T-cell (primary cell): ENCODE measurements at regions of chr3 and their contacts with region 1.

Region 1: DNA sequence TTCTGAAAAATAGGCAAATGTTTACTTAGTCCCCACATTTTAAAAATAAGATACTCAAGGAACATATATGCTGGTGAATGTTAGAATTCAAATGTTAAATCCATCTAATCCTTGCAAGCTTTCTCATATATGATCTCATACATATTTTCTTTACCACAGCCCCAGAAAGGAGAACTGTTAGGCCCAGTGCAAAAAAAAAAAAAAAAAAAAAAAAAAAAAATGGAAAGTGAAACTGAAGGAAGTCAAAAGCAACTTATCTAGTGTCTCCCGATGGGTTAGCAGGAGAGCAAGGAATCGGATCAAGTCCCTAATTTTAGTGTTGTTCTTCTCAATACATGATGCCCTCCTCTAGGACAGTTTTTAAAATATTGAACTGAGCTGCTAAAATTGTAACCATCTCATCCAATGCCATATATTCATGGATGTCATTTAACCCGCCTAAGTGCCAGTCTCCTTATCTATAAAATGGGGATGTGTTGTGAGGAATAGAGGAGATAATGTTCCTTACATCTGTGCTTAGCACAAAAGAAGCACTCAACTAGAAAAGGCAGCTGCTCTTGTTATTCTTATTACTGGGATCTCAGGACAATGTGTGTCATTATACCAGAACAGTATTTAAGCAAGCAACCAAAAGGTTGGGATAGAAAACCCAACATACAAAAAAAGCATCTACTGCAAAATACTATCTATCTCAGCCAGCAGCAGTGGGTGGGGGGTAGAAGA is 279.7 kb downstream of the MAGI1 start:
- DNase-seq: no peak
- ATAC-seq: no peak
- H3K4me3 ChIP-seq: no peak overlapping the region
- H3K4me3 Mint-ChIP-seq: no peak overlapping the region
- H3K27ac ChIP-seq: no peak overlapping the region
- H3K27ac Mint-ChIP-seq: no peak overlapping the region
- H3K4me1 ChIP-seq: no peaks in the 10 kb centered on the region
- H3K4me1 Mint-ChIP-seq: no peaks in the 10 kb centered on the region
- H3K27me3 ChIP-seq: peaks cover 0 to 2% of the 10 kb centered on the region in 2 experiments
- H3K27me3 Mint-ChIP-seq: peaks cover 0 to 6% of the 10 kb centered on the region in 2 donors

Region 2: GRCh38 chr3:65597226-65597951 is 161.6 kb before region 1 on chr3:
- CTCF ChIA-PET with region 1: no interaction called
- POLR2A ChIA-PET with region 1: no interaction called
- DNase-seq: no peak
- ATAC-seq: no peak
- H3K4me3 ChIP-seq: no peak overlapping the region
- H3K4me3 Mint-ChIP-seq: no peak overlapping the region
- H3K27ac ChIP-seq: no peak overlapping the region
- H3K27ac Mint-ChIP-seq: no peak overlapping the region
- H3K4me1 ChIP-seq: no peaks in the 10 kb centered on the region
- H3K4me1 Mint-ChIP-seq: no peaks in the 10 kb centered on the region
- H3K27me3 ChIP-seq: peaks cover 9 to 18% of the 10 kb centered on the region in 2 experiments
- H3K27me3 Mint-ChIP-seq: peaks cover 24 to 28% of the 10 kb centered on the region in 2 donors

Region 3: DNA sequence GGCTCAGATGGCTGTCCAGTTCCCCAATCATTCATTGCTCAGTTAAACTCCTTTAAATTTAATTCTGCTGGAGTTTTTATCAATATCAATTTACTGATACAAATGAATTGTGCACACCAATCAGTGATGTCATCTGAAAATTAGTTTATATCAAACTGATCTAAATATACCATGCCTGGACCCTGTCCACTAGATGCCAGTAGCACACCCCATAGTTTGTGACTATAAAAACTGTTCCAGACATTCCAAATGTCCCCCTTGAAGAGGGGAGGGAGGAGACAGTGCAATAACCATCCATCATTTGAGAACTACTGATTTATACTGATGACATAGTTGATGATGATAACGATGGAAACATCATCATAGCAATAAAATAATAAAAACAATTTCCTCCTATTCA is 47.6 kb after region 1 on chr3:
- CTCF ChIA-PET with region 1: no interaction called
- POLR2A ChIA-PET with region 1: interaction called in 1 of 2 experiments, 10 read pairs
- DNase-seq: no peak
- ATAC-seq: no peak
- H3K4me3 ChIP-seq: no peak overlapping the region
- H3K4me3 Mint-ChIP-seq: no peak overlapping the region
- H3K27ac ChIP-seq: no peak overlapping the region
- H3K27ac Mint-ChIP-seq: no peak overlapping the region
- H3K4me1 ChIP-seq: no peaks in the 10 kb centered on the region
- H3K4me1 Mint-ChIP-seq: no peaks in the 10 kb centered on the region
- H3K27me3 ChIP-seq: no peaks in the 10 kb centered on the region
- H3K27me3 Mint-ChIP-seq: no peaks in the 10 kb centered on the region